CD14-positive monocyte (primary cell): ENCODE measurements at regions of chr7 and their contacts with region 1.

Region 1: GRCh38 chr7:106009403-106010226 is 46.6 kb downstream of the CDHR3 start:
- DNase-seq: peak; percentile 51 to 74 (median 57)
- H3K4me3 ChIP-seq: no peak overlapping the region
- H3K4me3 Mint-ChIP-seq: peak overlapping the region in 1 of 2 donors; percentile 62
- H3K27ac ChIP-seq: no peak overlapping the region
- H3K27ac Mint-ChIP-seq: no peak overlapping the region
- H3K4me1 ChIP-seq: no peaks in the 10 kb centered on the region
- H3K4me1 Mint-ChIP-seq: peaks cover 10% of the 10 kb centered on the region
- H3K27me3 ChIP-seq: peaks cover 0 to 4% of the 10 kb centered on the region in 2 donors
- H3K27me3 Mint-ChIP-seq: peaks cover 10 to 34% (median 11%) of the 10 kb centered on the region in 3 donors
- CTCF ChIP-seq: peak; percentile 94

Region 2: GRCh38 chr7:105652359-105652993 is 357.1 kb before region 1 on chr7:
- intact Hi-C with region 1: loop called in 1 of 2 experiments (anchors 10 kb)
- DNase-seq: peak; percentile 18 to 44 (median 29)
- H3K4me3 ChIP-seq: no peak overlapping the region
- H3K4me3 Mint-ChIP-seq: no peak overlapping the region
- H3K27ac ChIP-seq: no peak overlapping the region
- H3K27ac Mint-ChIP-seq: peak overlapping the region in 1 of 7 donors; percentile 15
- H3K4me1 ChIP-seq: no peaks in the 10 kb centered on the region
- H3K4me1 Mint-ChIP-seq: no peaks in the 10 kb centered on the region
- H3K27me3 ChIP-seq: no peaks in the 10 kb centered on the region
- H3K27me3 Mint-ChIP-seq: no peaks in the 10 kb centered on the region
- CTCF ChIP-seq: peak; percentile 80

Region 3: DNA sequence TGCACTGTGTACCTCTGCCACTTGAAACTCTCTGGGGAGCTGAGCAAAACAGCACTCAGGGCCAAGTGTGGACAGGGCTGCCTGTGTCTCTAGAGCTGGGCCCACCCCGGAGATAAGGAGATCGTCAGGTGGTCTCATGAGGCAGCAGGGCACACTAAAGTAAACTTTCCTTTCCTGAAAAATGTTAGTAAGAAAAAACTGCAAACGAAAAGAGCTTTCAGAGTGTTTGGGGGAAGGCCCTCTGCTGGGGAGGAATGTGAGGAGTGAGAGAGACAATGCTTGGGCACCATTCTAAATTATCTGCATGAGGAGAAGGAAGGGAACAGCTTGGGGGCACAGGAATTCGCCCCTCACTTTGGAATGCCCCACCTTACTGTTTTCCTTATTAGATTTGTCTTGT is 260.9 kb before region 1 on chr7:
- intact Hi-C with region 1: no loop called
- DNase-seq: no peak
- H3K4me3 ChIP-seq: no peak overlapping the region
- H3K4me3 Mint-ChIP-seq: no peak overlapping the region
- H3K27ac ChIP-seq: no peak overlapping the region
- H3K27ac Mint-ChIP-seq: peak overlapping the region in 1 of 7 donors; percentile 38
- H3K4me1 ChIP-seq: peaks cover 1 to 7% of the 10 kb centered on the region in 2 donors
- H3K4me1 Mint-ChIP-seq: peaks cover 12% of the 10 kb centered on the region
- H3K27me3 ChIP-seq: no peaks in the 10 kb centered on the region
- H3K27me3 Mint-ChIP-seq: peaks cover 0 to 3% (median 1%) of the 10 kb centered on the region in 3 donors
- CTCF ChIP-seq: no peak

Region 4: DNA sequence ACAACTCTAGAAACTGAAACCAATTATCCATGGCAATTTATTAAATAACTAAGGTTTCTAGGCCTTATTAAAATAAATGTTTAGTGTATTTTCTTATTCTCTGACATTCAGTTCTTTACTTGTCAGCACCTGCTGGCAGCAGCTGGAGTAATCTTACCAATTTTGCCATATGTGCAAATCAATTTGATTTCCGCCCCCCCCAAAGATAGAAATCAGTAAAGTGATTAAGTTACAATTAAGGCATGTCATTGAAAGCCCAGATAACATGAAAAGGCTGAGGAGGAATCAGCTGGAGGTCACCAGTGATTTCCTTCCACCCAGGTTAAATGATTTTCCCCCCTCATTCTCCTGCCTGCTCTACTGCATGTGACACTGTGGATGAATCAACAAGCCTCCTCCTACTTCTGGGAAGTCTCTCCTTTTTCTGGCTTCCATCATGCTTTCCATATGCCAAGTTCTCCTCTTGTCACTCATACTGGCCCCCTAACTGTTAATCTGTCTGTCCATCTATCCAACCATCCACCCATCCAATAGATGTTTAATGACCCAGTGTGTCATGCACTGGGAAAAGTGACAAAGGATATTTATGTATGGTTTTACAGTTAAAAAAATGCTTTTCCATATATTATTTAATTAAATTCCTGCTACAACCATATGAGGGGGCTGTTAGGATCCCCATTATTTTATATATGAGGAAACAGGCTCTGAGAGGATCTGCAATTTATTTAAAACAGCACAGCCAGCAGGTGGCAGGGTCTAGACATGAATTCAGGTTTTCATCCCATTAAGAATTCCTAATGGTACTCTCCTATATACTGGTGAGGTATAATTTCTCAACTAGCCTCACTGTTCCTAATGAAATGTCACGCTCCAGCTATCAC is 249.7 kb before region 1 on chr7:
- intact Hi-C with region 1: loop called (anchors 5 to 10 kb)
- DNase-seq: peak in 2 of 3 donors; percentile 20 to 28
- H3K4me3 ChIP-seq: no peak overlapping the region
- H3K4me3 Mint-ChIP-seq: no peak overlapping the region
- H3K27ac ChIP-seq: no peak overlapping the region
- H3K27ac Mint-ChIP-seq: no peak overlapping the region
- H3K4me1 ChIP-seq: no peaks in the 10 kb centered on the region
- H3K4me1 Mint-ChIP-seq: no peaks in the 10 kb centered on the region
- H3K27me3 ChIP-seq: no peaks in the 10 kb centered on the region
- H3K27me3 Mint-ChIP-seq: peaks cover 0 to 2% (median 0%) of the 10 kb centered on the region in 3 donors
- CTCF ChIP-seq: peak; percentile 74